ENCODE measurements at regions of chr19 and their contacts with region 1.

Region 1: GRCh38 chr19:57279418-57280066 is 743 bp upstream of the ZNF460 start:
- DNase-seq: peak; percentile 95
- ATAC-seq: peak; percentile 95 to 97

Region 2: GRCh38 chr19:57240311-57241090 is 39.0 kb before region 1 on chr19 and contains the start of gene ZNF805:
- intact Hi-C with region 1: loop called in 1 of 2 experiments (anchors 5 kb)
- DNase-seq: peak; percentile 98
- ATAC-seq: peak; percentile 99 to 100
- total RNA-seq, gene ZNF805: 9.2 to 13.9 TPM

Region 3: GRCh38 chr19:57320180-57321084 is 40.9 kb after region 1 on chr19 and contains the start of gene ZNF543:
- intact Hi-C with region 1: loop called in 1 of 2 experiments (anchors 2 kb)
- DNase-seq: peak; percentile 98
- ATAC-seq: peak; percentile 99 to 100
- total RNA-seq, gene ZNF543: 5.5 to 7.7 TPM

Region 4: GRCh38 chr19:57350877-57351805 is 71.6 kb after region 1 on chr19 and contains the start of gene ZNF304:
- intact Hi-C with region 1: loop called in 1 of 2 experiments (anchors 10 kb)
- DNase-seq: peak; percentile 96
- ATAC-seq: peak; percentile 99
- total RNA-seq, gene ZNF304: 7.2 to 12.9 TPM